Natural killer cell (primary cell): ENCODE measurements at regions of chr15 and their contacts with region 1.

Region 1: GRCh38 chr15:29090617-29091466 is 178.8 kb downstream of the NSMCE3 start:
- DNase-seq: peak; percentile 55 to 70
- ATAC-seq: peak; percentile 57 to 61 (median 61)
- H3K4me3 ChIP-seq: no peak overlapping the region
- H3K4me3 Mint-ChIP-seq: peak overlapping the region; percentile 78
- H3K27ac ChIP-seq: peak overlapping the region; percentile 76
- H3K27ac Mint-ChIP-seq: peak overlapping the region; percentile 73 to 92
- H3K4me1 ChIP-seq: peaks cover 37% of the 10 kb centered on the region
- H3K4me1 Mint-ChIP-seq: peaks cover 40 to 48% of the 10 kb centered on the region in 2 donors
- H3K27me3 ChIP-seq: no peaks in the 10 kb centered on the region
- H3K27me3 Mint-ChIP-seq: no peaks in the 10 kb centered on the region
- CTCF ChIP-seq: peak; percentile 97

Region 2: DNA sequence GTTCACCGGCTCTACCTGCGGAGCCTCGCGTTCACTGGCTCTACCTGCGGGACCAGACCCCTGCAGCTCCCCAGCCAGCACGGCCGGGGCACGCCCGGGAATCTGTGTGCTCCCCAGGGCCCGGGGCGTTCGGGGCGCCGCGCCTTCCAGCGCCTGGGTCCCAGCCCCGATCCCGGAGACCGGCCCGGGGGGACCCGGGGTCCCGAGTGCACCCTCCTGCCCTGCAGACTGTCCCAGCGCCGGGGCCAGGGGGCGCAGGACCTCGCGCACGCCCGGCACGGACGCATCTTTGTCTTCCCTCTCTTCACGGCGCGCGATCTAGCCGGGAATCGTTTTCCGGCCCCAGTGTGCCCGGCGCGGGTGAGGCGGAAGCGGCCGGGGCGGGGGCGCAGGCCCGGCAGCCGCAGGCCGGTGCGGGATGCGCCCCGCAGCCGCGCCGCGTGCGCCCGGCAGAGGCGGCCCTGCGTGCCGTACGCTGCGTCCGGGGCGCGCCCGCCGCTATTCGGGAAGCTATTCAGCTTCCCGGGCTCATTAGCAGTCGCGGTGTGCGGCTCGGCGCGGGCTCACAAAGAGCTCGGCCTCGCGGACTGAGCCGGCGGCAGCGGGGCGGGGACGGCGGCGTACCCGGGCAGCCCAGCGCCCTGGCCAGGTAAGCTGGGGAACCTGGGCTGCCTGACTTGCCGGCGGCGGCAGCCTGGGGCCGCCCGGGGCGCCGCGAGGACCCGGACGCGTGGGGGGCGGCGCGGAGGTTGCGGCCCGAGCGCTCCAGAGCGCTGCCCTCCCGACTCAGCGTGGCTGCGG is 205.0 kb before region 1 on chr15 and contains the start of gene APBA2:
- intact Hi-C with region 1: loop called (anchors 2 kb)
- DNase-seq: peak; percentile 56 to 70
- ATAC-seq: peak; percentile 69 to 79 (median 77)
- H3K4me3 ChIP-seq: peak within 1 kb of the TSS; percentile 42
- H3K4me3 Mint-ChIP-seq: peak within 1 kb of the TSS; percentile 90
- H3K27ac ChIP-seq: no peak within 1 kb of the TSS
- H3K27ac Mint-ChIP-seq: peak within 1 kb of the TSS in 1 of 2 donors; percentile 70
- H3K4me1 ChIP-seq: peaks cover 48% of the 10 kb centered on the region
- H3K4me1 Mint-ChIP-seq: peaks cover 33 to 45% of the 10 kb centered on the region in 2 donors
- H3K27me3 ChIP-seq: no peaks in the 10 kb centered on the region
- H3K27me3 Mint-ChIP-seq: no peaks in the 10 kb centered on the region
- CTCF ChIP-seq: no peak
- total RNA-seq, gene APBA2: 96.4 to 119 (median 97.9) TPM

Region 3: GRCh38 chr15:29031502-29032228 is 59.2 kb before region 1 on chr15:
- intact Hi-C with region 1: loop called (anchors 5 kb)
- DNase-seq: peak; percentile 35 to 45
- ATAC-seq: peak; percentile 83 to 87 (median 83)
- H3K4me3 ChIP-seq: no peak overlapping the region
- H3K4me3 Mint-ChIP-seq: peak overlapping the region; percentile 60
- H3K27ac ChIP-seq: peak overlapping the region; percentile 75
- H3K27ac Mint-ChIP-seq: peak overlapping the region; percentile 87 to 90
- H3K4me1 ChIP-seq: peaks cover 64% of the 10 kb centered on the region
- H3K4me1 Mint-ChIP-seq: peaks cover 72 to 79% of the 10 kb centered on the region in 2 donors
- H3K27me3 ChIP-seq: no peaks in the 10 kb centered on the region
- H3K27me3 Mint-ChIP-seq: no peaks in the 10 kb centered on the region
- CTCF ChIP-seq: no peak